ENCODE measurements at regions of chr7 and their contacts with region 1.

Region 1: GRCh38 chr7:155291045-155291530 is 6.6 kb upstream of the INSIG1 start:
- DNase-seq: peak in 2 of 14 experiments; percentile 57 to 74
- ATAC-seq: no peak
- H3K4me3 ChIP-seq: no peak overlapping the region
- H3K4me3 Mint-ChIP-seq: no peak overlapping the region
- H3K27ac ChIP-seq: no peak overlapping the region
- H3K27ac Mint-ChIP-seq: no peak overlapping the region
- H3K4me1 ChIP-seq: peaks cover 22% of the 10 kb centered on the region
- H3K4me1 Mint-ChIP-seq: peaks cover under 1% of the 10 kb centered on the region
- H3K27me3 ChIP-seq: no peaks in the 10 kb centered on the region
- H3K27me3 Mint-ChIP-seq: peaks cover 4% of the 10 kb centered on the region
- CTCF ChIP-seq: no peak

Region 2: DNA sequence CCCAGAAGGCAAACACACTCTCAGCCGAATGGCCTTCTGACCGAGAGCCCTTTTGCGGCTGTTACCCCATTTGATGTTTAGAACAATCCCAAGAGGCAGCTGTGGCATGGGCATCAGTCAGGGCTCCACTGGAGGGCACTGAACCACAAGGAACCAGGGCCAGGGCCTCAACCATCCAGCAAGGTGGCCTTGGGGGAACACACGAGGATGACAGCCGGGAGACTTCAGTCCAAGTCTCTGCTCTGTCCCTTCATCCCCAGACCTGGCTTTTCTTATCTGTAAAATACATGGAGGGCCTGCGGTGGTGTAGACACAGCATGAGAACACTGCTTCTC is 57.0 kb before region 1 on chr7:
- CTCF ChIA-PET with region 1: no interaction called
- POLR2A ChIA-PET with region 1: no interaction called
- intact Hi-C with region 1: loop called in 1 of 2 experiments (anchors 5 kb)
- DNase-seq: peak in 6 of 14 experiments; percentile 6 to 39 (median 20)
- ATAC-seq: no peak
- H3K4me3 ChIP-seq: no peak overlapping the region
- H3K4me3 Mint-ChIP-seq: no peak overlapping the region
- H3K27ac ChIP-seq: no peak overlapping the region
- H3K27ac Mint-ChIP-seq: no peak overlapping the region
- H3K4me1 ChIP-seq: no peaks in the 10 kb centered on the region
- H3K4me1 Mint-ChIP-seq: no peaks in the 10 kb centered on the region
- H3K27me3 ChIP-seq: peaks cover 0 to 2% of the 10 kb centered on the region in 2 experiments
- H3K27me3 Mint-ChIP-seq: peaks cover 8% of the 10 kb centered on the region
- CTCF ChIP-seq: no peak

Region 3: GRCh38 chr7:155277690-155277994 is 13.4 kb before region 1 on chr7:
- CTCF ChIA-PET with region 1: no interaction called
- POLR2A ChIA-PET with region 1: no interaction called
- intact Hi-C with region 1: no loop called
- DNase-seq: no peak
- ATAC-seq: no peak
- H3K4me3 ChIP-seq: no peak overlapping the region
- H3K4me3 Mint-ChIP-seq: no peak overlapping the region
- H3K27ac ChIP-seq: no peak overlapping the region
- H3K27ac Mint-ChIP-seq: no peak overlapping the region
- H3K4me1 ChIP-seq: no peaks in the 10 kb centered on the region
- H3K4me1 Mint-ChIP-seq: no peaks in the 10 kb centered on the region
- H3K27me3 ChIP-seq: peaks cover 0 to 3% of the 10 kb centered on the region in 2 experiments
- H3K27me3 Mint-ChIP-seq: peaks cover 13% of the 10 kb centered on the region
- CTCF ChIP-seq: no peak

Measured in CD4-positive, alpha-beta T cell (primary cell).